ENCODE measurements at regions of chr11 and their contacts with region 1.

Region 1: GRCh38 chr11:124758317-124759203 is 3.5 kb downstream of the ESAM start:
- DNase-seq: peak; percentile 45
- H3K4me3 ChIP-seq: peak overlapping the region in 2 of 3 experiments; percentile 10 to 22
- H3K27ac ChIP-seq: no peak overlapping the region
- H3K4me1 ChIP-seq: peaks cover 20% of the 10 kb centered on the region
- H3K27me3 ChIP-seq: peaks cover 25% of the 10 kb centered on the region
- CTCF ChIP-seq: peak; percentile 49 to 73

Region 2: DNA sequence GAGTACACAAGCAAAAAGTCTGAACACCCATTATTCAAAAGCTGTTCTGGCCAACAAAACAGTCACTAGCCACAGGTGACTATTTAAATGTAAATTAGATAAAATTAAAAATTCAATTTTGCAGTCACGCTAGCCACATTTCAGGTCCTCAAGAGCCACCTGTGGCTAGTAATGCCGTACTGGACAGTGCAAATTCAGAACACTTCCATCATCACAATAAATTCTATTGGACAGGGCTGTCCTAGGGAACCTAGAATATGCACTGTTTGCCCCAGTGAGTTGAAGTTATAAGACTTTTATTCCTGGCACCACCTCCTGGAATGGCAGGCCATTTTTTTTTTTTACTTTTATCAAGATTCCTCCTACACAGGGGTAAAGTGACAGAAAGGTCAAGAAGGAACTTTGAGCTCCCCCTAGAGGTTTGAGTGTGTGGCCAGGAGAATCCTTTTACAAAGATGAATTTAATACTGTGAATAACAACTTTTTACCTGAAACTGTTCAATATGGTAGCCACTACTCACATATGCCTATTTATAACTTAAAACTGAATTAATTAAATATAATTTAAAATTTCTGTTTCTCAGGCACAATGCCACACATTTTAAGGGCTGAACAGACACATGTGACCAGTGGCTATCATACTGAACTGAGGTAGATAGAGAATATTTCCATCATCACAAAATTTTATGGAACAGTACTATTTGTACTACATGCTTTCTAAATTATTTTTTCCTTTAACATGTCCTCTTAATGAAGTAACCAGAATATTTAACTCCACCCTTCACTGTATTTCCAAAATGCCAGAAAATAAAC is 35.1 kb after region 1 on chr11:
- CTCF ChIA-PET with region 1: no interaction called
- dilution Hi-C with region 1: no loop called
- in situ Hi-C with region 1: no loop called
- intact Hi-C with region 1: loop called (anchors 1 kb)
- DNase-seq: peak; percentile 35
- H3K4me3 ChIP-seq: no peak overlapping the region
- H3K27ac ChIP-seq: no peak overlapping the region
- H3K4me1 ChIP-seq: peaks cover 3% of the 10 kb centered on the region
- H3K27me3 ChIP-seq: no peaks in the 10 kb centered on the region
- CTCF ChIP-seq: peak; percentile 70 to 77